ENCODE measurements at regions of chr6 and their contacts with region 1.

Region 1: DNA sequence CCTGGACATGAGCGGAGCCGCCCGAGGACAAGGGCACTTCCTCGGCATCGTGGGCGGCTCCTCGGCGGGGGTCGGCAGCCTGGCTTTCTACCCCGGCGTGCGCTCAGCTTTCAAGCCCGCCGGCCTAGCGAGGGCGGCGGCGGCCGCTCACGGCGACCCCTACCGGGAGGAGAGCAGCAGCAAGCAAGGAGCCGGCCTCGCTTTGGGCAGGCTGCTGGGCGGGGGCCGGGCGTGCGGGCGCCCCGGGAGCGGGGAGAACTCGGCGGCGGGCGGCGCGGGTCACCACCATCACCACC is 6.7 kb downstream of the PRDM13 start:
- H3K4me3 Mint-ChIP-seq: peak overlapping the region; percentile 77
- H3K27ac Mint-ChIP-seq: no peak overlapping the region
- H3K4me1 Mint-ChIP-seq: peaks cover 27% of the 10 kb centered on the region
- H3K27me3 Mint-ChIP-seq: peaks cover 87% of the 10 kb centered on the region

Region 2: GRCh38 chr6:99467509-99468106 is 145.7 kb before region 1 on chr6:
- intact Hi-C with region 1: loop called (anchors 5 kb)
- H3K4me3 Mint-ChIP-seq: no peak overlapping the region
- H3K27ac Mint-ChIP-seq: no peak overlapping the region
- H3K4me1 Mint-ChIP-seq: no peaks in the 10 kb centered on the region
- H3K27me3 Mint-ChIP-seq: no peaks in the 10 kb centered on the region

Region 3: GRCh38 chr6:99668036-99668705 is 54.8 kb after region 1 on chr6:
- intact Hi-C with region 1: no loop called
- H3K4me3 Mint-ChIP-seq: no peak overlapping the region
- H3K27ac Mint-ChIP-seq: no peak overlapping the region
- H3K4me1 Mint-ChIP-seq: no peaks in the 10 kb centered on the region
- H3K27me3 Mint-ChIP-seq: no peaks in the 10 kb centered on the region

Measured in dendritic cell treated with granulocyte-macrophage colony-stimulating factor and Interleukin-4, amounts not matched to agents 40 ng/mL and 50 ng/mL, for 4 days (primary cell).